HAP-1 (cell line): ENCODE measurements at regions of chr4 and their contacts with region 1.

Region 1: GRCh38 chr4:2761035-2761923 is 5.1 kb upstream of the TNIP2 start:
- DNase-seq: no peak
- H3K4me3 ChIP-seq: no peak overlapping the region
- H3K4me1 ChIP-seq: peaks cover 7% of the 10 kb centered on the region
- H3K27me3 ChIP-seq: no peaks in the 10 kb centered on the region

Region 2: DNA sequence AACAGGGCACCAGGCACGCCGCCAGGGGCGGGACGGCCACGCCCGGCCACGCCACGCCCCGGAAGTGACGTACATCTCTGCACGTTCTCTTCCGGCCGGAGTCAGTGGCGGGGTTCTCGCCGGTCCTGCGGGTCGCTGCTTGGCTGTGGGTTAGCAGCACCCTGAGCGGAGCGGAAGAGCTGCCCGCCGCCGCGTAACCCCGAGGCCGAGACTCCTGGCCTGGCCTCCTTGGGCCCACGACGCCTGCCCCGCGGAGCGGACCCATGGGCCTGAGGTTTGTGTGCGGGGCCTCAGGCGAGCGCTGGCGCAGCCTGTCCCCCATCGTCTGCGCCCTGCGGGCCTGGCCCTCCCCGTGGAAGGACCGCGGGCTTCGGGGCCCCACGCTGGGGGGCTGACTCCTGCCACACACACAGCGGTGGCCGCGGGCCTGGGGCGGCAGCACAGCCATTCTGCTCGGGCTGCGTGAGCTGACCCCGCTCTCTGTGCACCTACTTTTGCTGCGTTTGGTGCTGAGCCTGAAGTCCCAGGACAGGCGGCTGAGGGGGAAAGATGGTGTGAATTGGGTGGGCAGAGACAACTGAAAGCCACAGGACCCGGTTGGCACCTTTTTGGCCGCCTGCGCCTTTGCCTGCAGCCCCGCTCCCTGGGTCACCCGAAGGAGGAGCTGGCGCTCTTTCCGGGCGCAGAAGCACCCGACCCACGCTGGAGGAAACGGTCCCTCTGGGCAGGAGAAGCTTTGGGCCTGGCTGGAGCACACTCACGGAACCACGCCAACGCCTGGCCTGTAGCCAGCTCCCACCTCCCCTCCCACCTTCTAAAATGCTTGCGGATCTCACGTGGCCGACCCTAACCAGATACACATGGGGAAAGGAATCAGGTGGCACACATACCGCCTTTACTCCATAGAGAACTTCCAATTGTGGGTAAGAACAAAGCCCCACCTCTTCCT is 173.8 kb after region 1 on chr4:
- in situ Hi-C with region 1: loop called (anchors 10 kb)
- DNase-seq: peak; percentile 62 to 97
- H3K4me3 ChIP-seq: peak overlapping the region; percentile 81
- H3K4me1 ChIP-seq: peaks cover 21% of the 10 kb centered on the region
- H3K27me3 ChIP-seq: no peaks in the 10 kb centered on the region